PC-9 (cell line): ENCODE measurements at regions of chr12 and their contacts with region 1.

Region 1: DNA sequence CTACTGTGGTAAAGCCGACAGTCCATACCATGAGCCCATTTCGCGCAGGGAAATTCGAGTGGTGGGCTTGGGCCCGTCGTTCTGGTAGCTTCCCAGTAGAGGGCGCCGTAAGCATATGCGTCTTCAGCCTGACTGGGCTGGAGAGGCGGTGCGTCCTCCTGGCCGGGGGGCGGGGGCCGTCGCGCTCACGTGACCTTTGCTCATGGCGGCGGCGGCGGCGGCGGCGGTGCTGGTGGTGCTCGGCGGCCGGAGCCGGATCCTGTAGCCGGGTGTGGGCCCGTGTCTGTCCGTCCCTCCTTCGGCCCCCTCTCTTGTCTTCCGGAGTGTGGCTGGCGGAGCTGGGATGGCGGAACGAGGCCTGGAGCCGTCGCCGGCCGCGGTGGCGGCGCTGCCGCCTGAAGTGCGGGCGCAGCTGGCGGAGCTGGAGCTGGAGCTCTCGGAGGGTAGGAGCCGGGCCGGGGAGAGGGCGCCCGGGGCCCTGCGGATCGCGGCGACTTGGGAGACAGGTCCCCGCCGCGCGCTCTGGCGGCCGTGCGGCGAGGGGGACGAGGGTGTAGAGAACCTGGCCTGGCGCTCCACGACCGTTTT is at the start of gene DIP2B:
- DNase-seq: peak; percentile 71 to 93
- H3K4me3 ChIP-seq: peak within 1 kb of the TSS; percentile 96
- H3K27ac ChIP-seq: peak within 1 kb of the TSS; percentile 65
- H3K4me1 ChIP-seq: peaks cover 30% of the 10 kb centered on the region
- H3K27me3 ChIP-seq: no peaks in the 10 kb centered on the region
- CTCF ChIP-seq: peak; percentile 93
- total RNA-seq, gene DIP2B: 29.0 and 29.4 TPM in 2 replicates

Region 2: GRCh38 chr12:50637870-50638481 is 133.1 kb after region 1 on chr12:
- CTCF ChIA-PET with region 1: interaction called, 16 read pairs
- POLR2A ChIA-PET with region 1: interaction called, 11 read pairs
- intact Hi-C with region 1: loop called (anchors 1 kb)
- DNase-seq: peak in 1 of 2 experiments; percentile 59
- H3K4me3 ChIP-seq: no peak overlapping the region
- H3K27ac ChIP-seq: peak overlapping the region; percentile 45
- H3K4me1 ChIP-seq: peaks cover 43% of the 10 kb centered on the region
- H3K27me3 ChIP-seq: no peaks in the 10 kb centered on the region
- CTCF ChIP-seq: peak; percentile 78

Region 3: GRCh38 chr12:50734409-50735263 is 229.7 kb after region 1 on chr12:
- CTCF ChIA-PET with region 1: interaction called, 3 read pairs
- POLR2A ChIA-PET with region 1: interaction called, 5 read pairs
- intact Hi-C with region 1: loop called (anchors 2 kb)
- DNase-seq: peak in 1 of 2 experiments; percentile 18
- H3K4me3 ChIP-seq: no peak overlapping the region
- H3K27ac ChIP-seq: no peak overlapping the region
- H3K4me1 ChIP-seq: no peaks in the 10 kb centered on the region; the same call in 1 of the 2 replicates
- H3K27me3 ChIP-seq: no peaks in the 10 kb centered on the region
- CTCF ChIP-seq: peak; percentile 69

Region 4: DNA sequence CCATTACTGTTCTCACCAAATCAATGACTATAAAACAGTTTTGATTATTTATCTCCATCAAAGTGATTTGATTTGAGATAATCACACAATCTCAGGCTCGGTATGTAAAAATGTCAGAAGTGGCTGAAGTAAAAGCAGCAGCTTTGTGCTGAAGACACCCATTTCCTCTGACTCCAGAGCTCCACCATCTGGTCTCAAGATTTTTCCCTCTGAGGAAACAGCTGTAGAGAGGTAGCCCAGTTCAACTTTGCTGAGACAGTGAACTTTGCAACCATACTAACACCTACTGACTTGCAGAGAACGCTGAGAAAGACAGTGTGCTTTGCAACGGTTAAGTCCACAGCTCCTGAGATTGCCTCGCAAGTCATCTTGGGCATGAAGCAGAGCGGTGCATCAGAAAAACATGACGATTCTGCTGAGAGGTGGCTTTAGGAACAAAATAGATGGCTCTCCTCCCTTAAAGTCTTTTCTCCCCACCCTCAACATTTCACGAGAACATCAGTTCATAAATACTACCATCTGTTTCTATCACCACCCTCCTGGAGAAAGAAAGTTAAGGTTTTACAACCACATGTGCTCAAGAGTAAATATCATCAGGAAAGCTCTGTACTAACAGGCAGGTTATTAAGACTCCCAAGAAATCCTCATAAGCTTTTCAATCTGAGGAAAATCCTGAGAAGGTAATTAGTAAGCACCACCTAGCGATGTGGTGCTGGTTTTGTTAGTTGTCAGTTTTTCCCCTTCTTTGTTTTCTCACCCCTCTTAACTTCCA is 482.3 kb after region 1 on chr12:
- CTCF ChIA-PET with region 1: no interaction called
- POLR2A ChIA-PET with region 1: no interaction called
- intact Hi-C with region 1: loop called (anchors 5 kb)
- DNase-seq: peak in 1 of 2 experiments; percentile 18
- H3K4me3 ChIP-seq: no peak overlapping the region
- H3K27ac ChIP-seq: no peak overlapping the region
- H3K4me1 ChIP-seq: no peaks in the 10 kb centered on the region
- H3K27me3 ChIP-seq: no peaks in the 10 kb centered on the region
- CTCF ChIP-seq: peak; percentile 62; the same call in 1 of the 2 replicates